Panc1 (cell line): ENCODE measurements at regions of chr10 and their contacts with region 1.

Region 1: DNA sequence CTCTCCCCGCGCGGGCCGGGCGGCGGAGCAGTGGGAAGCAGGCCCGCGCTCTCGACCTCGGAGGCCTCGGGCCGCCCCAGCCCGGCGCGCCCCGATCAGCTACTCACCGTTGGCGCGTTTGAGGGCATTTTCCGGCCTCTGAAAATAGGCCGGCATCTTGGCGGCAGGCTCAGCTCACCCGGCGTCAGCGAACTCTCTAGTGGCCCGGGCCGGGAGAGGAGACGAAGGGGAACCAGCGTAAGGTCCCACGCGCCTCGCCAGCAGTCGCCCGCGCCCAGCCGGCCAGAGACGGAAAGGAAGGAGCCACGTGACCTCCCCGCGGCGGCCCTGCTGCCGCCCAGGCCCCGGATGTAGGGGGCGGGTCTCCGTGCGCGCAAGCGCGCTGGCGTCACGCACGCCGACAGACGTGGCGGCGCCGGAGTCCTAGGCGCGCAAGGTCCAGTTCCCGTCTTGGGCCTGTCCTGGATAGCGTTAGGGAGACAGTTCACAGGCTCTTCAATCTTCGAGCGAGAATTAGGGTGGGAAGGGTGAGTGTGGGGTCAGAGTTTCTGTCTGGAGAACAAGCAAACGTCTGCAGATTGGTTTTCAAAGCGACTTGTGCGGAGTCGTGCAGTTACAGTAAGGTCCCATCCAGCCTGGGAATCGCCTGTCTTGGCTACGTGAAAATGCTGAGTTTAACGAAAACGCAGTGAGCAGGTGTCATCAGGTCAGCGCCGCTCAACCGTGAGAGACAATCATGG is at the start of gene EIF3A:
- DNase-seq: peak; percentile 84
- ATAC-seq: peak; percentile 94
- H3K4me3 ChIP-seq: peak within 1 kb of the TSS; percentile 92 to 96
- H3K27ac ChIP-seq: peak within 1 kb of the TSS; percentile 98
- H3K4me1 ChIP-seq: peaks cover 22% of the 10 kb centered on the region
- H3K27me3 ChIP-seq: no peaks in the 10 kb centered on the region
- CTCF ChIP-seq: no peak
- total RNA-seq, gene EIF3A: 214 TPM

Region 2: DNA sequence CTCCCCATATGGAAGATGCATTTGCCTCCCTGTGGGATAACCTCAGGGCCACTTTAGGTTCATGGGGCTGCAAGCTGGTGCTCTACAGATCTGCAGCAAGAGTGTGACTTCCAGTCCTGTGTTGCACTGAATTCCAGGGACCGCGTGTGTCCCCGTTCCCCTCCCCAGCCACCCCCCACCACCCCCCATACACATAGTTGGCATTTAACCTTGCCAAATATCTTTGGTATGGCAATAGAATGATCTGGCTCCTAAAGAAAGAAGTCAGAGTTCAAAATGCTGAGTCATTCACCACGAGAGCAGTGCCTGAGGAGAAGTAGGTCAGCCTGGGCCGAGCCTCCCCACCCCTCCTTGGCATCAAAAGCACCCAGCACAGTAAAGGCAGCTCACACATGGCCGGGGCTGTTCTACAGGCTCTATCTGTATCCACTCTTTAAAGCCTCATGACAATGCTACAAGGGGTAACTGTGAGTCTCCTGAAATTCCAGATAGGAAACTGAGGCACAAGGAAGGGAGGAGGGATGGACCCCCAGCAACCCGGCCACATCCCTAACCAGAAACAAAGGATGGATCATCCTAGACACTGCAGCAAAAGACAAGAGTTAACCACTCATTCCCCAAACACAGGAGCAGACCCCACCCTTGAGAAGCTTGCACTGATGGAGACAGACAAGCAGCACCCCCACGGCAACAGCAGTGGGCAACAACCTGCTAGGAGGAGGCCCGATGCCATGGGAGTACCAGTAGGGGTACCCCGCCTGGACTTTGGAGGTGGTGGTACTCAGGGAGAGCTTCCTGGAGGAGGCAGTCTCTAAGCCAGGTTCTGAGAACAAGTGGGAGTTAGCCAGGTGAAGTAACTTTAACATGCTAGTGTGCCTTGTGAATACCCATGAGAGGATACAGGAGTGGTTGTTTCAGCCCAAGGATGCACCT is 121.4 kb before region 1 on chr10:
- CTCF ChIA-PET with region 1: no interaction called
- POLR2A ChIA-PET with region 1: no interaction called
- in situ Hi-C with region 1: no loop called
- intact Hi-C with region 1: no loop called
- DNase-seq: no peak
- ATAC-seq: peak; percentile 84
- H3K4me3 ChIP-seq: no peak overlapping the region
- H3K27ac ChIP-seq: peak overlapping the region; percentile 78
- H3K4me1 ChIP-seq: peaks cover 26% of the 10 kb centered on the region
- H3K27me3 ChIP-seq: no peaks in the 10 kb centered on the region
- CTCF ChIP-seq: no peak

Region 3: DNA sequence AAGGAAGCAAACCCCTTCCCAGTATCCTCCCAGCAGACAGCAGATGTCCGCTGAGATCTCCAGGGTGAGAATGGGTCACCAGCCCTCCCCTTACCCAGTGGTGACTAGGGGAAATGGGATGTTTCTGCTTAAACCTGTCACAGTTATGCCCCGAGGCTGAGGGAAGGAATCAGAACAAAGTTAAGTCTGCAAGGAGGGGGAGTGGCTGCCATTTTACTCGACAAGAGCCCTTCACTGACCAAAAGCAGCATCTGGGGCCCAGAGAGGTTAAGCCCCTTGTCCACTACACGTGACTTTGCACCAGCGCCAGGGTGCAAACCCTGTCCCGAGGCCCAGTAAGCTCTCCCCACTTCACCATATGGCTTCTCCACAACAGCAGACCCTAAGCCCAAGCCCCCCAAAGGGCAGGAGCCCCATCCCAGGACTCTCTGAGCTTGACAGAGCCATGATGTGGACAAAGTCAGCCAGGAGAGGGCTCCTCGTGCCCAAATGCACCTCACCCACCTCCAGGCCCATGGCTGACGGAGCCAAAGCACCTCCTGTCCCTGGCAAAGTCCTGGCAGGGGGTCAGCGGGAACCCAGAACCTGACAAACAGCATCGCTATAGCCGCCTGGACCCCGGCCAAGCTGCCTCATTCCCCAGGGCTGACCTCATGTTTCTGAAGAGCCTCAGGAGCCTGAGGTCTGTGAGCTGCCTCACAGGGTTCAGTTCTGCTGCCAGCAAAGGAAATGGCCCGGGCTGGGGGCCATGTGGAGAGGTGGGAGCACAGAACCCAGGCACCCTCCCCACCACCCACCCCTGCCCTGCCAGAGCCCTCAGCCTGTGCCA is 55.6 kb before region 1 on chr10:
- CTCF ChIA-PET with region 1: no interaction called
- POLR2A ChIA-PET with region 1: no interaction called
- in situ Hi-C with region 1: no loop called
- intact Hi-C with region 1: no loop called
- DNase-seq: no peak
- ATAC-seq: no peak
- H3K4me3 ChIP-seq: peak overlapping the region in 1 of 2 experiments; percentile 1; a peak in 1 of 4 replicates
- H3K27ac ChIP-seq: peak overlapping the region; percentile 85
- H3K4me1 ChIP-seq: peaks cover 49% of the 10 kb centered on the region
- H3K27me3 ChIP-seq: no peaks in the 10 kb centered on the region
- CTCF ChIP-seq: no peak

Region 4: DNA sequence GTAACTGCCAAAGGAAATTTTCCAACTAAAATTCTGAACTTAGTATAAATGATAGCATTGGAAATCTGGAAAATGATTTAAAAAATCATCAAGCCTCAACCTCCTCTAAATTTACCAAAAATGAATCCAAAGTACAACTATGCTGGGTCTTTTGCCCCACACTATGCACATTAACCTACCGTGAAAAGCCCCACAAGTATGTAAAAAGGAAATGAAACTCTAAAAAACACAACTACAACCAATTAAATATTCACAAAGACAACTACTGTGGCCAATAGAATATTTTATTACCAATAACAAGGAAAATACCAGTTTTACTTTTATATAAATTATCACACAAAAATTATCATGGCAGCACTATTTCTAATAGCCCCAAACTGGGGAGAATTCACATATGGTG is 19.3 kb before region 1 on chr10:
- CTCF ChIA-PET with region 1: no interaction called
- POLR2A ChIA-PET with region 1: interaction called, 13 read pairs
- in situ Hi-C with region 1: no loop called
- intact Hi-C with region 1: no loop called
- DNase-seq: no peak
- ATAC-seq: no peak
- H3K4me3 ChIP-seq: no peak overlapping the region
- H3K27ac ChIP-seq: no peak overlapping the region
- H3K4me1 ChIP-seq: no peaks in the 10 kb centered on the region
- H3K27me3 ChIP-seq: no peaks in the 10 kb centered on the region
- CTCF ChIP-seq: no peak

Region 5: GRCh38 chr10:119070395-119071165 is 10.1 kb before region 1 on chr10:
- CTCF ChIA-PET with region 1: no interaction called
- POLR2A ChIA-PET with region 1: interaction called, 13 read pairs
- in situ Hi-C with region 1: no loop called
- intact Hi-C with region 1: no loop called
- DNase-seq: no peak
- ATAC-seq: no peak
- H3K4me3 ChIP-seq: no peak overlapping the region
- H3K27ac ChIP-seq: no peak overlapping the region
- H3K4me1 ChIP-seq: peaks cover 14% of the 10 kb centered on the region; the same call in 1 of the 2 replicates
- H3K27me3 ChIP-seq: no peaks in the 10 kb centered on the region
- CTCF ChIP-seq: no peak

Region 6: GRCh38 chr10:119095640-119096039 is 14.9 kb after region 1 on chr10:
- CTCF ChIA-PET with region 1: interaction called, 12 read pairs
- POLR2A ChIA-PET with region 1: interaction called, 3 read pairs
- in situ Hi-C with region 1: no loop called
- intact Hi-C with region 1: no loop called
- DNase-seq: no peak
- ATAC-seq: no peak
- H3K4me3 ChIP-seq: no peak overlapping the region
- H3K27ac ChIP-seq: no peak overlapping the region
- H3K4me1 ChIP-seq: no peaks in the 10 kb centered on the region
- H3K27me3 ChIP-seq: no peaks in the 10 kb centered on the region
- CTCF ChIP-seq: no peak

Region 7: GRCh38 chr10:119526621-119527592 is 446.2 kb after region 1 on chr10:
- CTCF ChIA-PET with region 1: no interaction called
- POLR2A ChIA-PET with region 1: no interaction called
- in situ Hi-C with region 1: no loop called
- intact Hi-C with region 1: no loop called
- DNase-seq: no peak
- ATAC-seq: peak; percentile 56; the same call in 1 of the 2 replicates
- H3K4me3 ChIP-seq: no peak overlapping the region
- H3K27ac ChIP-seq: no peak overlapping the region
- H3K4me1 ChIP-seq: peaks cover 6% of the 10 kb centered on the region; the same call in 1 of the 2 replicates
- H3K27me3 ChIP-seq: no peaks in the 10 kb centered on the region
- CTCF ChIP-seq: no peak